H1 (cell line): ENCODE measurements at regions of chr6 and their contacts with region 1.

Region 1: GRCh38 chr6:165439928-165440554 is 130.6 kb upstream of the C6orf118 start:
- DNase-seq: no peak
- H3K4me3 ChIP-seq: no peak overlapping the region
- H3K27ac ChIP-seq: no peak overlapping the region
- H3K4me1 ChIP-seq: no peaks in the 10 kb centered on the region
- H3K27me3 ChIP-seq: no peaks in the 10 kb centered on the region
- CTCF ChIP-seq: peak in 2 of 3 experiments; percentile 27 to 56; a peak in 2 of 4 replicates
- EP300 ChIP-seq: no peak
- POLR2A ChIP-seq: no peak
- RAD21 ChIP-seq: peak; percentile 59 to 72

Region 2: GRCh38 chr6:165456286-165456685 is 16.2 kb after region 1 on chr6:
- CTCF ChIA-PET with region 1: interaction called, 18 read pairs
- POLR2A ChIA-PET with region 1: no interaction called
- DNase-seq: no peak
- H3K4me3 ChIP-seq: no peak overlapping the region
- H3K27ac ChIP-seq: no peak overlapping the region
- H3K4me1 ChIP-seq: no peaks in the 10 kb centered on the region
- H3K27me3 ChIP-seq: peaks cover 0 to 4% (median 0%) of the 10 kb centered on the region in 4 experiments; a peak in 2 of 7 replicates
- CTCF ChIP-seq: no peak
- EP300 ChIP-seq: no peak
- POLR2A ChIP-seq: no peak
- RAD21 ChIP-seq: no peak